Endothelial cell of umbilical vein (primary cell): ENCODE measurements at regions of chr15 and their contacts with region 1.

Region 1: DNA sequence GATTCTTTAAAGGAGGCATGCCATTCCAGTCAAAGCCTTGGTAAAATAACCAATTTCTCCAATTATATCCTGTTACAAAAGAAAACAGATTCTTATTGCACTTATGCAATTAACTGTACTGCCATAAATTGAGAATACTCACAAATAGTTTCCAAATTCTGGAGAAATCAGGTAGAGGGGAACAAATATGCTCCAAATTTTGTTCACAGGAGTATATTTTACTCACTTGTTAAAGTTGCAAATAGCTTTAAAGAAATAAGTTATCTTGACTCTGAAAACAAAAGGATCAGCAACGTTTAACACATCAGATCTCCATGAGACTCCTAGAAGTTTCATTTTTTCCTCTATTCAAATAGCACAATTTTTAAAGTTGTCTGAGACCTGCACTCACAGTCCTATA is 712.1 kb upstream of the ARRDC4 start:
- DNase-seq: no peak
- H3K4me3 ChIP-seq: no peak overlapping the region
- H3K27ac ChIP-seq: no peak overlapping the region
- H3K4me1 ChIP-seq: no peaks in the 10 kb centered on the region
- H3K27me3 ChIP-seq: no peaks in the 10 kb centered on the region
- CTCF ChIP-seq: no peak
- POLR2A ChIP-seq: no peak

Region 2: GRCh38 chr15:96345560-96346399 is 902.6 kb before region 1 on chr15:
- CTCF ChIA-PET with region 1: interaction called, 11 read pairs
- POLR2A ChIA-PET with region 1: no interaction called
- dilution Hi-C with region 1: no loop called
- intact Hi-C with region 1: no loop called
- DNase-seq: peak; percentile 86
- H3K4me3 ChIP-seq: peak overlapping the region; percentile 16 to 99 (median 74)
- H3K27ac ChIP-seq: peak overlapping the region; percentile 87
- H3K4me1 ChIP-seq: peaks cover 83% of the 10 kb centered on the region
- H3K27me3 ChIP-seq: no peaks in the 10 kb centered on the region
- CTCF ChIP-seq: peak; percentile 22 to 33
- POLR2A ChIP-seq: no peak

Region 3: GRCh38 chr15:96367311-96368200 is 880.8 kb before region 1 on chr15:
- CTCF ChIA-PET with region 1: interaction called, 15 read pairs
- POLR2A ChIA-PET with region 1: no interaction called
- dilution Hi-C with region 1: no loop called
- intact Hi-C with region 1: no loop called
- DNase-seq: peak; percentile 30
- H3K4me3 ChIP-seq: peak overlapping the region; percentile 15 to 57 (median 21)
- H3K27ac ChIP-seq: no peak overlapping the region
- H3K4me1 ChIP-seq: peaks cover 7% of the 10 kb centered on the region
- H3K27me3 ChIP-seq: no peaks in the 10 kb centered on the region
- CTCF ChIP-seq: no peak
- POLR2A ChIP-seq: no peak

Region 4: GRCh38 chr15:96574782-96575181 is 673.6 kb before region 1 on chr15:
- CTCF ChIA-PET with region 1: no interaction called
- POLR2A ChIA-PET with region 1: no interaction called
- dilution Hi-C with region 1: no loop called
- intact Hi-C with region 1: no loop called
- DNase-seq: no peak
- H3K4me3 ChIP-seq: no peak overlapping the region
- H3K27ac ChIP-seq: no peak overlapping the region
- H3K4me1 ChIP-seq: no peaks in the 10 kb centered on the region
- H3K27me3 ChIP-seq: peaks cover 0 to 3% of the 10 kb centered on the region in 2 experiments
- CTCF ChIP-seq: no peak
- POLR2A ChIP-seq: no peak

Region 5: DNA sequence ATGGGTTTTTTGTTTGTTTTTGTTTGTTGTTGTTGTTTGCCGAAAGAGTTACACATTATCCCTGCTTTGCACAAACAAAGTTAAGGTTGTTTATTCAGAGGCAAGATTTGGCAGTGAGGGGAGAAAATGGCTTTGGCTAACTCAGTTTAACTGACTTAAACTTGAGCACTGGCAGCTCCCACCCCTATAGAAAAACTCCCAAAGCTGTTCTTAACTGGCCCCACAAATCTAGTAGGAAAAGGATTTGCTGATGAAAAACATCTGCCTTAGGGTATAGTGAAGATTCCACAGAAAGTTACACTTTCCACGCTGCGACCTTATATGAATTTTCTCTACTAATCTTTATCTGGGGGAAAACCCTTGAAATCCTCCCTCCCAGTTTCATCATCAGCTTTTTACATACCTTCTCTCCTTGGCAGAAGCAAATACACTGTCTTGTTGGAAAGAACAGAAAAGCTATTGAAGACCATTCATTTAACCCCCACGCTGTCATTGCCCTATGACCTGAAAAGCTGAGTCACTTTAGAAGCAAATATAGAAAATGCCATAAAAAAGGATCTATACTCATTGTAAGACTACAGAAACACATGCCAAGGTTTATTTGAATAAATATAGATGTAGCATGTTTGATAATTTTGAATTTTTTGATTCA is 366.1 kb before region 1 on chr15:
- CTCF ChIA-PET with region 1: no interaction called
- POLR2A ChIA-PET with region 1: no interaction called
- dilution Hi-C with region 1: no loop called
- intact Hi-C with region 1: no loop called
- DNase-seq: no peak
- H3K4me3 ChIP-seq: no peak overlapping the region
- H3K27ac ChIP-seq: no peak overlapping the region
- H3K4me1 ChIP-seq: no peaks in the 10 kb centered on the region
- H3K27me3 ChIP-seq: no peaks in the 10 kb centered on the region
- CTCF ChIP-seq: no peak
- POLR2A ChIP-seq: no peak

Region 6: DNA sequence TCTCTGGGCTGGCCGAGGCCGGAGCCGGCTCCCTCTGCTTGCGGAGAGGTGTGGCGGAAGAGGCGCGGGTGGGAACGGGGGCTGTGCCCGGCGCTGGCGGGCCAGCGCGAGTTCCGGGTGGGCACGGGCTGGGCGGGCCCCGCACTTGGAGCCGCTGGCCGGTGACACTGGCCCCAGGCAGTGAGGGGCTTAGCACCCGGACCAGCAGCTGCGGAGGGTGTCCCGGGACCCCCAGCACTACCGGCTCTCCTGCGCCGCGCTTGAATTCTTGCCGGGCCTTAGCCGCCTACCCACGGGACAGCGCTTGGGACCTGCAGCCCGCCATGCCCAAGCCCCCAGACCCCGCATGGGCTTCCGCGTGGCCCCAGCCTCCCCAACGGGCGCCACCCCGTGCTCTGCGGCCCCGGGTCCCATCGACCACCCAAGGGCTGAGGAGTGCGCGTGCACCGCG is 24.2 kb before region 1 on chr15:
- CTCF ChIA-PET with region 1: interaction called, 11 read pairs
- POLR2A ChIA-PET with region 1: no interaction called
- dilution Hi-C with region 1: no loop called
- intact Hi-C with region 1: no loop called
- DNase-seq: no peak
- H3K4me3 ChIP-seq: no peak overlapping the region
- H3K27ac ChIP-seq: no peak overlapping the region
- H3K4me1 ChIP-seq: no peaks in the 10 kb centered on the region
- H3K27me3 ChIP-seq: no peaks in the 10 kb centered on the region
- CTCF ChIP-seq: no peak
- POLR2A ChIP-seq: no peak

Region 7: GRCh38 chr15:97692301-97693015 is 444.1 kb after region 1 on chr15:
- CTCF ChIA-PET with region 1: no interaction called
- POLR2A ChIA-PET with region 1: no interaction called
- dilution Hi-C with region 1: no loop called
- intact Hi-C with region 1: no loop called
- DNase-seq: no peak
- H3K4me3 ChIP-seq: no peak overlapping the region
- H3K27ac ChIP-seq: no peak overlapping the region
- H3K4me1 ChIP-seq: no peaks in the 10 kb centered on the region
- H3K27me3 ChIP-seq: no peaks in the 10 kb centered on the region
- CTCF ChIP-seq: no peak
- POLR2A ChIP-seq: no peak

Region 8: DNA sequence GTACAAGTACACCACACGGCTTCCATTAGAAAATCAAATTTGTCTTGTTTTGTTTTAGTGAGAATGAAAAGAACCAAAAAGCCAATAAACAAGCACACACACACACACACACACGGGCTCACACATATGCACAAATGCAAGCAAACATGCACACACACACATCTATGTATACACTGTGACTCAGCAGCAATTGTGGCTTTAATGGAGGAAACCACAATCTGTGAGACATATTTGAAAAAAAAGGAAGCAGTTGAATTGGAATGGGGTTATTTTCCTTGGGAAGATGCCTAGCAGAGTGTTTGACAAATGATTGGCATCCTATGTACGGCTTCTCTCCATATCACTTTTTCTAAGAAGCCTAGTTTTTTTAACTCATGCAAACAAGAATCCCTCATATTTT is 511.0 kb after region 1 on chr15:
- CTCF ChIA-PET with region 1: interaction called, 69 read pairs
- POLR2A ChIA-PET with region 1: no interaction called
- dilution Hi-C with region 1: no loop called
- intact Hi-C with region 1: loop called (anchors 1 kb)
- DNase-seq: peak; percentile 62
- H3K4me3 ChIP-seq: no peak overlapping the region
- H3K27ac ChIP-seq: no peak overlapping the region
- H3K4me1 ChIP-seq: peaks cover 4% of the 10 kb centered on the region
- H3K27me3 ChIP-seq: peaks cover 4 to 18% of the 10 kb centered on the region in 2 experiments
- CTCF ChIP-seq: no peak
- POLR2A ChIP-seq: no peak

Region 9: DNA sequence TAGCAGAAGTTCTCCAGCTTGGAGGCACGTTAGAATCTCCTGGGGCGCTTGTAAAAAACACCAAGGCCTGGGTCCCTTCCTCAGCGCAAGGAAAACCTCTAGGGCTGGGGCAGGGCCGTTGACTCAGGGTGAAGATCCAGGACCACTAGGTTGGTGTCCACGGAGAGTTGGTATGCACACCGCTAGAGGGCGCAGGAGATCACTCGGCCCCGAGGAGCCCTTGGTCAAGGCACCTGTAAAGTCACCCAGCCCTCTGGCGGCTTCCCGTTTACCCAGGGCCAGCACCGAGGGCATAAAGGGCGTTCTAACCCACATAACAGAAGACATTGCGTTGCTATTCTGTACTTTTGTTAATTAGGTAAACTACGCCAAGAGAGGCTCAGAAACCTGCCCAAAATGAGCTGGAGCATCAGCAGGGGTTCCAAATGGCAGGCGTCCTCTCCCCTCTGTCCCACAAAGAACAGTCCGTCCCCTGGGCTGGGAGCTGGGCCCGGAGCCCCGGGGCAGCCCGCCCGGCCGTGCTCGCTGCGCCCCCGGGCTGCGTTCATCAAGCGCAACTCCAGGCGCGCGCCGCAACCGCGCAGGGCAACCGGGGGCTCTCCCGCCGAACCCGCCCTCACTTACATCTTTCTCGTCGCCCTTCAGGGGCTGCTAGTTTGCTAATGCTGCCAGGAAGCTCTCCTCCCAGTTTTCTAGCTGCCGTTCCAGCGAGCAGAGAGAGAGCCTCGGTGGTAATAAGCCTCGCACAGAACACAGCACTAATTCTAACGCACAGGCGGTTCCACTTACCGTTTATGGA is 1044.3 kb after region 1 on chr15:
- CTCF ChIA-PET with region 1: no interaction called
- POLR2A ChIA-PET with region 1: no interaction called
- dilution Hi-C with region 1: no loop called
- intact Hi-C with region 1: loop called (anchors 10 kb)
- DNase-seq: peak; percentile 6
- H3K4me3 ChIP-seq: no peak overlapping the region
- H3K27ac ChIP-seq: no peak overlapping the region
- H3K4me1 ChIP-seq: no peaks in the 10 kb centered on the region
- H3K27me3 ChIP-seq: no peaks in the 10 kb centered on the region
- CTCF ChIP-seq: peak; percentile 62 to 77
- POLR2A ChIP-seq: no peak